Lower leg skin (tissue), 4 donors: ENCODE measurements at regions of chr19 and their contacts with region 1.

Region 1: GRCh38 chr19:43080186-43080585 is 2.3 kb downstream of the PSG2 start:
- DNase-seq: no peak
- H3K4me3 ChIP-seq: no peak overlapping the region
- CTCF ChIP-seq: no peak
- POLR2A ChIP-seq: no peak

Region 2: GRCh38 chr19:42816894-42817293 is 263.3 kb before region 1 on chr19:
- intact Hi-C with region 1: no loop called
- DNase-seq: no peak
- H3K4me3 ChIP-seq: no peak overlapping the region
- CTCF ChIP-seq: no peak
- POLR2A ChIP-seq: no peak

Region 3: GRCh38 chr19:42919511-42920021 is 160.6 kb before region 1 on chr19:
- intact Hi-C with region 1: loop called (anchors 10 kb)
- DNase-seq: no peak
- H3K4me3 ChIP-seq: no peak overlapping the region
- CTCF ChIP-seq: no peak
- POLR2A ChIP-seq: no peak